Posterior vena cava (tissue), 2 donors: ENCODE measurements at regions of chr1 and their contacts with region 1.

Region 1: DNA sequence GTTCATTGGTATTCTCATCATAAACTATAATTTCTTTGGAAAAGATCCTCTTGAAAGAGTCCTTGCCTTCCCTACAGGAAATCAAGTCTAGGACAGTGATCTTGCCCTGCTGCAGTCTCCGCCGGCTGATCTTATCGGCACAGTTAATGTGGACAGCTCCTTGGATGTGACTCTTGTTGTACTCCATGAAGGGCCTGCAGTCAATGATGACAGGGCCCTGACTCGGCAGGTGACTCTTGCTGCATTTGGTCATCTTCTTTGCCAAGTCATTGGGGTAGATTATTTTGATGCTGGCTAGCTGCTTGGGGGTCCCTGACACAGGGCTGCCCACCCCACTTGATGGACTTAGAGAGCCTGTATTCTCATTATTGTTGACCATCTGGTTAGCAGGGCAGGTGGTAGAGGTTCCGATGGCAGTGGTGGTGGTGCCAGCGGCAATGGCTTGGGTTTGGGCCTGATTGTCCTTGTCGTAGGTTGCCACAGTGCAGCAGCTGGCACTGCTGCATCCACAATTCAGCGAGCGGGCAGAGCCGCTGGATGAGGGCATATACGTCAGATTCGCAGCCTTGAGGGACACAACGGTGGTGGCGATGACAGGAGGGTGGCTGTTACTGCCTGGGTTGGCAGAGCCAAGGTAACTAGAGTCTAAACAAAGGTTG is 2.7 kb downstream of the DUSP10 start:
- DNase-seq: no peak

Region 2: GRCh38 chr1:221272940-221273339 is 466.2 kb before region 1 on chr1:
- intact Hi-C with region 1: no loop called
- DNase-seq: no peak

Region 3: GRCh38 chr1:221543529-221544120 is 195.5 kb before region 1 on chr1:
- intact Hi-C with region 1: loop called in 1 of 2 experiments (anchors 10 kb)
- DNase-seq: no peak